ENCODE measurements at regions of chr9 and their contacts with region 1.

Region 1: DNA sequence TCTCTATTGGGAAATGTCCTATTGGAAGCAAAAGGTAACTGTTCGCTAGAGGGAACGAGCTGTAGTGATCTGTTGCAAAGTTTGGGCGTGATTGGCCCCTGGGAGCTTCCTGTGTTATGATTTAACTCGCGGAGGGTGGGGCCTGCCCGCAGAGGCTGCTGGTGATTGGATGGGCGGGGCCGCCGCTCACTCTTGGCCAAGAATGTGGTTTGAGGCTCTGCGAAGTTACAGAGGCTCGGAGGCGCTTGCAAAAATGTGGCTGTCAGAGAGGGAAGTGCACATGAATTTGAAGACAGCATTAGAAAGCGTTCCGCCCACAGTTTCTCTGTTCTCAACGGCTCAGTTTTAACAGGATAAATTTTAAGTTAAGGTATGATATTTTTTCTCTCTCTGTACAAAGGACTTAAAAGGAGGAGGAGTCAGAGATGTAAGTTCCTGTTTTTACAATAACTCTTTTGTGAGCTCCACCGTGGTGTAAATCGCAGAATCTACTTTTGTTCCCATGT is 46.9 kb downstream of the CNTRL start:
- DNase-seq: peak; percentile 94
- ATAC-seq: peak; percentile 100
- H3K4me3 ChIP-seq: peak overlapping the region; percentile 52
- H3K27ac ChIP-seq: no peak overlapping the region
- H3K4me1 ChIP-seq: peaks cover 2% of the 10 kb centered on the region
- H3K27me3 ChIP-seq: no peaks in the 10 kb centered on the region
- CTCF ChIP-seq: peak; percentile 29; the same call in 1 of the 2 replicates
- POLR2A ChIP-seq: no peak
- RAD21 ChIP-seq: peak; percentile 35; the same call in 1 of the 2 replicates

Region 2: DNA sequence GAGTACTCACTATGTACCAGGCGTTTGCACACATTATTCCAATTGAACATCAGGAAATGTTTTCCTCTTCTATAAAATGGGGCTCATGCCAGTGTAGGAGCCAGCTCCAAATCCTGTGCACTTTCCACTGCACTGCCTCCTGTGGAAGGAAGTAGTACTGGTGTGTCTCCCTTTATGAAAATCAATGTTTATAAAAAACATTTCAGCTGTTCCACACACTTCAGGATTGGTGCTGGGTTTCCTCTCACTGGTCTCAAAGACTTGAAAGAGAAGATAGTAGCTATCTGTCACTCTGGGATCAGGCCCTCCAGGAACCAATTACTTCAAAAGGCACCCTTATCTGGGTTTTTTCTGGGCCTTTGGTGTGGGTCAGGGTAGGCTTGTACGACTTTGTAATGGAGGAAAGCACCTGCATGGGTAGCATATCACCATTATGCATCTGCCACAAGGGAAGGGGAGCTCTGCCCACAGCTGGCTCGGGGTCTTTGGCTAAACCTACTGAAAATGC is 47.5 kb after region 1 on chr9:
- CTCF ChIA-PET with region 1: no interaction called
- POLR2A ChIA-PET with region 1: interaction called, 12 read pairs
- dilution Hi-C with region 1: no loop called
- in situ Hi-C with region 1: no loop called
- intact Hi-C with region 1: no loop called
- DNase-seq: no peak
- ATAC-seq: peak; percentile 51; the same call in 1 of the 2 replicates
- H3K4me3 ChIP-seq: no peak overlapping the region
- H3K27ac ChIP-seq: no peak overlapping the region
- H3K4me1 ChIP-seq: peaks cover 5% of the 10 kb centered on the region; the same call in 1 of the 2 replicates
- H3K27me3 ChIP-seq: no peaks in the 10 kb centered on the region
- CTCF ChIP-seq: peak; percentile 32; the same call in 1 of the 2 replicates
- POLR2A ChIP-seq: no peak
- RAD21 ChIP-seq: no peak

Region 3: DNA sequence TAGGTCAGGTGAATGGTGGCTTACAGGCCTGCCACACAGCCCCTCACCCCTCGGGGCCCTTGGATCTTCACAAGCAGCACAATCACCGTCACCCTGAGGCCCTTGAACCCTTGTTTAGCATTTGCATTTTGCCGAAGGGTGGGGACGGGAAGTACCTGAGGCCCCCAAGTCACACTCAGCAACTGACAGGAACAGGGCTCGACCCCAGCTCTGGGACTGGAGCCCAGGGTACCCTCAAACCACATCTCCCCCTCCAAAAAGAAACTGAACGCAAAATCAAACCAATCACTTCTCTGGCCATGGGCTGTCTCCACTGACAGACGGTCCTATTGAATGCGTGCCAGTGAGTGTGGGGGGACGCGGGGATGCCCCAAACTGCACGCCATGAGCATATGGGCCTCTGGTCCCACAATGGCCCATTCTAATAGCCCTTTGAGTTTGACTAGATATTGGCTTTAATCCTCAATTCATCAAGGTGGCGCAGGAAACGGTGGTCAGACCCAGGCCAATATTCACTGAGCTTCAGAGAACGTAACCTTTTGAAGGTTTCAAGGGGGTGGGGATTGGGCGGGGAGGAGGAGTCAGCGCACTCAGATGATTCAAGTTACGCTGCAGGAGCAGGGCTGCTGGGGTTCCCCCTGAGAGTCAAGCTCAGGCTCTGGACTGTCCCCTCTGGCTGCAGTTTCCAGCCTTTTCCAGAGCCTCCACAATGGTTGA is 705.8 kb after region 1 on chr9:
- CTCF ChIA-PET with region 1: no interaction called
- POLR2A ChIA-PET with region 1: no interaction called
- dilution Hi-C with region 1: no loop called
- in situ Hi-C with region 1: no loop called
- intact Hi-C with region 1: no loop called
- DNase-seq: no peak
- ATAC-seq: no peak
- H3K4me3 ChIP-seq: no peak overlapping the region
- H3K27ac ChIP-seq: no peak overlapping the region
- H3K4me1 ChIP-seq: peaks cover 8% of the 10 kb centered on the region
- H3K27me3 ChIP-seq: no peaks in the 10 kb centered on the region
- CTCF ChIP-seq: no peak
- POLR2A ChIP-seq: no peak
- RAD21 ChIP-seq: no peak

Measured in IMR-90 (cell line).